ENCODE measurements at regions of chr17 and their contacts with region 1.

Region 1: DNA sequence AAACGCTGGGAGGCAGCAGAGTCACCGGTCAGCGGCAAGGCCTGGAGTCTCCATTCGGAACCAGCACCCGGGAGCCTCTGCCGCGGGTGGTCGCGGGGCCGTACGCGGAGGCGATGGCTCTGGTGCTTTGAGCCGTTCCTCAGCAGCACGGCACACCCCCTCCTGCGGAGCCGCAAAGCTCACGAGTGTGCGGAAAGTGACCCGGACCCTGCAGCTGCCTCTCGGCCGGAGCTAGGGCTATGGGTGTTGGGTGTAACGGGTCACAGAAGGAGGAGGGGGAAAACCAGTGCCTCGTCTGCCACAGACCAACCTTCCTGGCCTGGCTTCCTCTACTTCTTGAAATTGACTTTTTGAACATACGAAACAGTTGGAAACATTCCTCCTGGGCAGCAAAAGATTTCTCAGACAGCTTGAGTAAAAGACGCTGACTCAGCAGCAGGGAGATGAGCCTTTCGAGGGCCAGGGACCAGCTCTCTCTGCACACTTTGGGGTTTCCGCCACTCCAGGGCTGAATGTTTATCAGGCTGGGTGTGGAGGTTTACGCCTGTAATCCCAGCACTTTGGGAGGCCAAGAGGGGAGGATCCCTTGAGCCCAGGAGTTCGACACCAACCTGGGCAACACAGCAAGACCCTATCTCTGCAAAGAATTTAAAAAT is 26.3 kb upstream of the PITPNA start:
- DNase-seq: no peak
- ATAC-seq: no peak
- H3K4me3 ChIP-seq: no peak overlapping the region
- H3K27ac ChIP-seq: no peak overlapping the region
- H3K4me1 ChIP-seq: peaks cover 16% of the 10 kb centered on the region
- H3K27me3 ChIP-seq: no peaks in the 10 kb centered on the region
- CTCF ChIP-seq: no peak

Region 2: DNA sequence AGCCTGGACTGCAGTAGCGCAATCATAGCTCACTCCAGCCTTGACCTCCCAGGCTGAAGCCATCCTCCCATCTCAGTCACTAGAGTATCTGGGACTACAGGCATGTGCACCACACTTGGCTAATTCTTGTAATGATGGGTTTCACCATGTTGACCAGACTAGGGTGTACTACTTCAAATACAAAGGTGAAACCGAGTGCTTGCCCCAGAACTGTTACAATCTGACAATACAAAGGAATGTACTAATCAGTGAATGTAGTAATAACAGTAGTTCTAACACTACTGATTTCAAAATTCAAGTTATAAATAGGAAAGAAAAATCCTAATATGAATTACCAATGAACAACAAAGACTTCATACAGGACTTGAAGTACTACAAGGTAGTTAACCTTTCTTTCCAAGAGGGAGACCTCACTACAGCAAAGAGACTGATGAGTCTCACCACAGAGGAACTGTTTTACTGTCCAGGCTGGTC is 157.3 kb before region 1 on chr17:
- CTCF ChIA-PET with region 1: no interaction called
- POLR2A ChIA-PET with region 1: no interaction called
- in situ Hi-C with region 1: no loop called
- intact Hi-C with region 1: no loop called
- DNase-seq: no peak
- ATAC-seq: no peak
- H3K4me3 ChIP-seq: no peak overlapping the region
- H3K27ac ChIP-seq: no peak overlapping the region
- H3K4me1 ChIP-seq: no peaks in the 10 kb centered on the region
- H3K27me3 ChIP-seq: no peaks in the 10 kb centered on the region
- CTCF ChIP-seq: no peak

Region 3: DNA sequence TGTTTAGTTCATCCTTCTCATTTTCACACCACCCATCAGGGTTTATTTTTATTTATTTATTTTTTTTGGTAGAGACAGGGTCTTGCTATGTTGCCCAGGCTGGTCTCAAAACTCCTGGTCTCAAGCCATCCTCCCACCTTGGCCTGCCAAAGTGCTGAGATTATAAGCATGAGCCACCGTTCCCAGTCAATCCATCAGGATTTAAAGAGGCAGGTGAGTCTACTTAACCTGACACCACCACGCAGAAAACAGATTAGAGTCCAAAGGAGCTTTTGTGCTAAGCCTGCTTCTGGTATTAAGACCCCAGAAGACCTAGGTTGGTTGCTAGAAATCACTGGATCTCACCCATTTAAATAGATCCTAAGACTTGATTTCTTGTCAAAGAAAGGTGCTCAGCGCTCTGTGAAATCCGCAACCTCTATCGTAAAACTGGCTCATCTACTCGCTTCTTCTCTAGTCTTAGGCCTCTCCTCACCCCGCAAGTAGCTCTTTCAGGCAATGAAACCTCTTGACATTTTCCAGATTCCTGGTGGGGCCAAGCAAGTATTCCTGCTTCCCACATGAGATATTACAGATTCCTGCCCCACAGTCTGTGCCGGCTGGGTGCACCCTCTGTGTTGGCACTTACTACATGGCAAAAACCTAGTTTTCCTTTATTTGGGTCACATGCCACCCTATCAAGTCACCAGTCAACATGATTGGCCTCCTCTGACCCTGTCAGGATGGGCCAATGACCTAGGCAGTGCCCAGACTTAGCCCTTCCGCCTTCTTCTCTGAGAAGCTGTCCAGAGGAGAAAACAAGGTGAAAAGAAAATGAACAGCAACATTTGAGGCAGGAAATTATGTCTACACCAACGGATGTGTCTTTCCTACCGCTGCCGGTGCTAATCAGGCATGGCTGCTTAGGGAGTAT is 35.3 kb before region 1 on chr17:
- CTCF ChIA-PET with region 1: no interaction called
- POLR2A ChIA-PET with region 1: interaction called, 16 read pairs
- in situ Hi-C with region 1: no loop called
- intact Hi-C with region 1: no loop called
- DNase-seq: no peak
- ATAC-seq: no peak
- H3K4me3 ChIP-seq: no peak overlapping the region
- H3K27ac ChIP-seq: no peak overlapping the region
- H3K4me1 ChIP-seq: no peaks in the 10 kb centered on the region
- H3K27me3 ChIP-seq: no peaks in the 10 kb centered on the region
- CTCF ChIP-seq: no peak

Measured in Panc1 (cell line).